ENCODE measurements at regions of chr17 and their contacts with region 1.

Region 1: DNA sequence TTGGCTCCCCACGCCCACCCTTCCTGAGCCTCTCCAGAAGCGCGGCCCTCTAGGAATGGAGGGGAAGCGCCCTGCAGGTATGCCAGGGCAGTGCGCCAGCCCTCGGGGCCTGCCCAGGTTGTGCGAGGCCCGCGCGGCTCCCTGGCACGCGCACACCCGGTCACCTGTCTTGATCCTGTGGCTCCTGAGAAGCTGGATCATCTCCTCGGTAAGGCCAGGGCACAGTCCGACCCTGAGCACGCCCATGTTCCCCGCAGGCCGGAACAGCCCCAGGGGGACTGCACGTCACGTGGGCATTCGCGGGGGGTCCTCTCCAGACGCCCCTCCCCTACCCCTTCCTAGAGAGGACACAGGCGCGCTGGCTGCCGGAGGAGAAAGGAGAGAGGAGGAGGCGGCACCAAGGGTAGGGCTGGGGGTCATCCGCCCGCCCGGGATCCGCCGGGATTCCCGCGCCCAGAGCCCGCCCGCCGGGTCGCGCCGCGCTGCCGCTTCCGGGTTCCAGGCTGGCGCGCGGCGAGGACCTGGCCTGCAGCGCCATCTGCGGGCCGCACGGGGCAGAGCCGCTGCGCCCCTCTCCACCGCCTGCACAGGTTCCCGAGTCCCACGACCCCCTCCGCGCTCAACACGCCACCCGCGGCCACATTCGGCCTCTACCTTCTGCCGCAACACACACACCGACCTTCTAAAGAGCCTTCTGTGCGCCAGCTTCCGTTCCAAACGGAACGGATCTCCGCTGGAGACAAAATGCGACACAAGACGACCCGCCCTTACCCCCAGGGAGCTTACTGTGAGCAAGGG is at the start of gene RAD51D:
- DNase-seq: peak; percentile 50 to 91 (median 72)
- ATAC-seq: peak; percentile 91 to 96 (median 93)
- H3K4me3 ChIP-seq: peak within 1 kb of the TSS; percentile 87 to 93
- H3K4me3 Mint-ChIP-seq: peak within 1 kb of the TSS; percentile 87 to 93 (median 88)
- H3K27ac ChIP-seq: peak within 1 kb of the TSS; percentile 62
- H3K27ac Mint-ChIP-seq: peak within 1 kb of the TSS; percentile 81 to 94
- H3K4me1 ChIP-seq: peaks cover 2 to 33% of the 10 kb centered on the region in 2 experiments
- H3K4me1 Mint-ChIP-seq: peaks cover 37 to 40% (median 38%) of the 10 kb centered on the region in 3 donors
- H3K27me3 ChIP-seq: no peaks in the 10 kb centered on the region
- H3K27me3 Mint-ChIP-seq: no peaks in the 10 kb centered on the region
- total RNA-seq, gene RAD51D: 14.6 to 29.9 (median 19.0) TPM

Region 2: GRCh38 chr17:34542700-34543336 is 576.7 kb before region 1 on chr17:
- CTCF ChIA-PET with region 1: interaction called, 3 to 18 read pairs
- POLR2A ChIA-PET with region 1: no interaction called
- DNase-seq: peak in 30 of 35 experiments; percentile 2 to 73 (median 35)
- ATAC-seq: peak; percentile 35 to 49 (median 43)
- H3K4me3 ChIP-seq: no peak overlapping the region
- H3K4me3 Mint-ChIP-seq: no peak overlapping the region
- H3K27ac ChIP-seq: no peak overlapping the region
- H3K27ac Mint-ChIP-seq: no peak overlapping the region
- H3K4me1 ChIP-seq: no peaks in the 10 kb centered on the region
- H3K4me1 Mint-ChIP-seq: no peaks in the 10 kb centered on the region
- H3K27me3 ChIP-seq: peaks cover 2 to 30% of the 10 kb centered on the region in 2 experiments
- H3K27me3 Mint-ChIP-seq: peaks cover 33 to 34% of the 10 kb centered on the region in 2 donors

Region 3: GRCh38 chr17:34998205-34998604 is 121.4 kb before region 1 on chr17:
- CTCF ChIA-PET with region 1: interaction called, 4 to 14 read pairs
- POLR2A ChIA-PET with region 1: no interaction called
- DNase-seq: peak; percentile 48 to 84 (median 72)
- ATAC-seq: peak; percentile 88 to 94 (median 92)
- H3K4me3 ChIP-seq: no peak overlapping the region
- H3K4me3 Mint-ChIP-seq: no peak overlapping the region
- H3K27ac ChIP-seq: no peak overlapping the region
- H3K27ac Mint-ChIP-seq: peak overlapping the region; percentile 68 to 89
- H3K4me1 ChIP-seq: peaks cover 0 to 8% of the 10 kb centered on the region in 2 experiments
- H3K4me1 Mint-ChIP-seq: peaks cover 6 to 7% (median 6%) of the 10 kb centered on the region in 3 donors
- H3K27me3 ChIP-seq: no peaks in the 10 kb centered on the region
- H3K27me3 Mint-ChIP-seq: no peaks in the 10 kb centered on the region

Region 4: GRCh38 chr17:35022536-35023063 is 97.0 kb before region 1 on chr17:
- CTCF ChIA-PET with region 1: interaction called in 1 of 2 experiments, 11 read pairs
- POLR2A ChIA-PET with region 1: interaction called in 1 of 2 experiments, 3 read pairs
- DNase-seq: peak; percentile 41 to 81 (median 61)
- ATAC-seq: peak; percentile 98 to 100 (median 100)
- H3K4me3 ChIP-seq: no peak overlapping the region
- H3K4me3 Mint-ChIP-seq: peak overlapping the region; percentile 43 to 69 (median 56)
- H3K27ac ChIP-seq: peak overlapping the region; percentile 95
- H3K27ac Mint-ChIP-seq: peak overlapping the region; percentile 98 to 99
- H3K4me1 ChIP-seq: peaks cover 24 to 34% of the 10 kb centered on the region in 2 experiments
- H3K4me1 Mint-ChIP-seq: peaks cover 54 to 66% (median 58%) of the 10 kb centered on the region in 3 donors
- H3K27me3 ChIP-seq: no peaks in the 10 kb centered on the region
- H3K27me3 Mint-ChIP-seq: no peaks in the 10 kb centered on the region

Region 5: DNA sequence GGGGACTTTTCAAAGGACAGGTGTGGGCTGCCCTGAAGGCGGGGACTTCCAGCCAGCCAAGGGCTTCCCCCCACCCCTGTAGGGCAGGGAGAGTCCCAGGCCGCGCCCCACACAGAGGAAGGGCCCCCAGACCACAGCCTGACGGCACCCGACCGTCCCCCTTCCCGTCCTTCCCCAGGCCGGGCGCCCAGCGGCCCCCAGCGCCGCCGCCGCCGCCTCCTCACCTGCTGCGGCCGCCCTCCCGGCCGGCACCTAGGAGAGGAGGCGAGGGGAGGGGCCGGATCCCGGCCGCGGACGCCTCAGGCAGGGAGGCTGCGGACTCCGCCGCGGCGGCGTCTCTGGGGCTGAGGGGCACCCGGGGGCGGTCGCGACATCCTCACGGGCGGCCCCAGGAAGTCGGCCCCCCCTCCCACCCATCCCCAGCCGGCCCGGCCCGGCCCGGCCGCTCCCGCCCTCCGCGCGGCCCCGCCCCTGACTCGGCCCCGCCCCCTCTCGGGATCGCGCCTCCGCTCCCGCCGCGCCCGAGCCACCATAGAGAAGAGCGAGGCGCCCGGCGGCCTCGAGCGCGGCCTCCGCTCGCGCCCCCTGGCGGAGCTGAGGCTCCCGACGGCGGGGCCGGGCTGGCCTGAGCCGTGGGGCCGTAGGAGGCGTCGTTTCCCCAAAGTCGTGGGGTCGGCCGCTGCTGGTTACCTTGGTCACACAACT is 30.5 kb before region 1 on chr17:
- CTCF ChIA-PET with region 1: interaction called in 1 of 2 experiments, 16 read pairs
- POLR2A ChIA-PET with region 1: interaction called in 1 of 2 experiments, 3 read pairs
- DNase-seq: peak; percentile 73 to 95 (median 85)
- ATAC-seq: peak; percentile 79 to 87 (median 81)
- H3K4me3 ChIP-seq: peak overlapping the region; percentile 88 to 89
- H3K4me3 Mint-ChIP-seq: peak overlapping the region; percentile 94 to 95 (median 94)
- H3K27ac ChIP-seq: peak overlapping the region; percentile 98
- H3K27ac Mint-ChIP-seq: peak overlapping the region; percentile 96
- H3K4me1 ChIP-seq: peaks cover 17 to 33% of the 10 kb centered on the region in 2 experiments
- H3K4me1 Mint-ChIP-seq: peaks cover 47 to 54% (median 51%) of the 10 kb centered on the region in 3 donors
- H3K27me3 ChIP-seq: no peaks in the 10 kb centered on the region
- H3K27me3 Mint-ChIP-seq: no peaks in the 10 kb centered on the region

Region 6: DNA sequence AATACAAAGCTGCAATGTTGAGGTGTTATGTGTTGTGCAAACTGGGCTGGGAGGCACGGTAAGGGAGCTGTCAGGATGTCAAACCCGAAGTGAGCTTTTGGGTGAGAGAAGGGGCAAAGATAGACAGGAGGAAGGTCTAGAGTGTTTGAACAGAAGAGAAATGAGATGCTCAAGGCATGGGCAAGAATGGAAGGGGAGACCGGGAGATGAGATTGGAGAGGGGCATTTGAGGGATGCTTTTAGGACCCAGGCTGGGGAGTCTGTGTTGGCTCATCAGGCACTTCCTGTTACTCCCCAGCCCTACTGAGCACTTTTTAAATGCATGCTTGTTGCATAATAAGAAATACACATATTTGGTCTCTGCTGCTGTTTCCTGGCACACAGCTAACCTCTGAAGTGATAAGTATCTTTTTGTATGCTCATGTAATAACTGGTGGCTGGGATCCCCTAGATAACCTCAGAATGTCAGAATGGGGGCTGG is 41.8 kb after region 1 on chr17:
- CTCF ChIA-PET with region 1: no interaction called
- POLR2A ChIA-PET with region 1: no interaction called
- DNase-seq: peak in 31 of 35 experiments; percentile 8 to 69 (median 28)
- ATAC-seq: peak; percentile 67 to 83 (median 80)
- H3K4me3 ChIP-seq: peak overlapping the region in 1 of 2 donors; percentile 27
- H3K4me3 Mint-ChIP-seq: peak overlapping the region; percentile 66 to 79 (median 71)
- H3K27ac ChIP-seq: peak overlapping the region; percentile 71
- H3K27ac Mint-ChIP-seq: peak overlapping the region; percentile 92 to 98
- H3K4me1 ChIP-seq: peaks cover 28 to 66% of the 10 kb centered on the region in 2 experiments
- H3K4me1 Mint-ChIP-seq: peaks cover 58 to 63% (median 61%) of the 10 kb centered on the region in 3 donors
- H3K27me3 ChIP-seq: no peaks in the 10 kb centered on the region
- H3K27me3 Mint-ChIP-seq: no peaks in the 10 kb centered on the region

Measured in T-cell (primary cell).